Heart right ventricle (tissue), 16 donors: ENCODE measurements at regions of chr12 and their contacts with region 1.

Region 1: GRCh38 chr12:109477185-109477962 is at the starts of genes KCTD10 and UBE3B:
- DNase-seq: peak; percentile 89 to 91
- ATAC-seq: peak; percentile 97 to 100 (median 99)
- H3K4me3 ChIP-seq: peak within 1 kb of the TSS; percentile 73 to 99 (median 88)
- H3K27ac ChIP-seq: peak within 1 kb of the TSS; percentile 92 to 100 (median 98)
- H3K4me1 ChIP-seq: peaks cover 8 to 63% (median 56%) of the 10 kb centered on the region in 9 donors
- H3K27me3 ChIP-seq: no peaks in the 10 kb centered on the region
- CTCF ChIP-seq: peak in 4 of 9 donors; percentile 14 to 37 (median 18)
- total RNA-seq, gene KCTD10: 21.5 to 64.9 (median 33.8) TPM
- total RNA-seq, gene UBE3B: 50.9 to 58.8 (median 55.8) TPM

Region 2: GRCh38 chr12:109421355-109422087 is 55.9 kb before region 1 on chr12:
- intact Hi-C with region 1: no loop called
- DNase-seq: no peak
- ATAC-seq: no peak
- H3K4me3 ChIP-seq: no peak overlapping the region
- H3K27ac ChIP-seq: no peak overlapping the region
- H3K4me1 ChIP-seq: no peaks in the 10 kb centered on the region
- H3K27me3 ChIP-seq: peaks cover 0 to 34% (median 5%) of the 10 kb centered on the region in 7 donors
- CTCF ChIP-seq: no peak

Region 3: DNA sequence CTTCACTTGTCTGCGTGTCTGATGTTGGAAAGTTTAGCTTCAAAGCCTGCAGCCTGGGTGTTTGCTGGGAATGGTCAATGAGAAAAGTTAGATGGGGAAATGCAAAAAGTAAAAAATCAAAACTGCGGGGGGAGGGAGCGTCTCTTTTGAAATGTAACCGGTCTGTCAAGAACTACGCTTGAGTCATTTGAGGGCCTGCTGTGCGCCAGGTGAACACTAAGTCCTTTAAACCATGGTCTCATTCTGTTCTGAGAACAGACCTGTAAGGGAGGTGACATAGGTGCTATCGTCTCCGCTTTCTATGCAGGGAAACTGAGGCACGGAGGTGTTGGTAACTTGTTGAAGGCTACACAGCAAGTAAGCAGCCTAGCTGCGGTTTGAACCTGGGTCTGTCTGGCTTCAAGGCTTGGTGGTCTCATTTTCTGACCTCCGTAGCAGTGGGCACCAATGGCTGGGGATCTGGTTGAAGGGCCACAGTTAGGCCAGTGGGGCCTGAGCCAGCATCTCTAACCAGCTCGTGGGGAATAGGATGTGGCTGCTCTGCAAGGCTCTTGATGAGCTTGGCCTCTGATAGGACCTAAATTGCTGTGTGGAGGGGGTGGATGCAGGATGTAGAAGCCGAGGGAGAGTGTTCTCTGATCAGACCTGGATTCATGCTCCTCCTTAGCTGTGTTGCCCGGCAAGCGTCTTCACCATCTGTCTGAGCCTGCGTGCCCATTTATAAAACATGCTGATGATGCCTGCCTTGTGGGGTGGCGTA is 41.8 kb before region 1 on chr12:
- intact Hi-C with region 1: loop called in 8 of 10 experiments (anchors 2 to 5 kb)
- DNase-seq: no peak
- ATAC-seq: no peak
- H3K4me3 ChIP-seq: no peak overlapping the region
- H3K27ac ChIP-seq: peak overlapping the region in 3 of 10 donors; percentile 20 to 32 (median 29)
- H3K4me1 ChIP-seq: peaks cover 0 to 29% (median 12%) of the 10 kb centered on the region in 9 donors
- H3K27me3 ChIP-seq: no peaks in the 10 kb centered on the region
- CTCF ChIP-seq: no peak